AG04450 (cell line): ENCODE measurements at regions of chr15 and their contacts with region 1.

Region 1: DNA sequence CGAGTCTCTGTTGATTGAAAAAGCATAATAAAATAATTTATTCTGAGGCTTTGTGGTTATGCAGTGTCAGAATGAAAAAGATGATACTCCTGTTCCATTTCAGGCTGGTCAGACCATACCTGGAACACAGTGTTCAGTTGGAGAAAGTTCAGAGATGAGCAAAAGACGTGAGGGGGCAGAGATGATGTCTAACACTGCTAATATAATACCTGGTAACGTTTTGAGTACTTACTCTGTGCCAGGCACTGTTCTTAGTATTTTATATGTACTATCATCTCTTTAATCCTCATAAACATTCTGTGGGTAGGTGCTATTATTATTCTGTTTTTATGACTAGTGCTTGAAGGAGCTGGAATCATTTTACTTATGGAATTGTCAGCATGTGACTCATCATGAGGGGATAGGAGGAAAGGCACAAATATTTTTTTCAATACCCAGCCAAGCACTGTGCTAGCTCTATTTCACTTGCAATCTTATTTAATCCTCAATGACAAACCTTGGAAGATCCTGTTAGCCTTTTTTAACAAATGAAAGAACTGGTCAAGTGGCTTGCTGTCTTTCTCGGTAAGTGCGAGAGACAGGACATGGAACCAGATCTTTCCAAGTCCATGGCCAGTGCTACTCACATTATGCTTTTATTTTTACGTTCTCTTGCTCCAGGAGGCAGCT is 31.8 kb downstream of the IQGAP1 start:
- DNase-seq: peak; percentile 59
- H3K4me3 ChIP-seq: peak overlapping the region; percentile 38
- H3K27ac ChIP-seq: peak overlapping the region; percentile 80
- H3K27me3 ChIP-seq: no peaks in the 10 kb centered on the region
- CTCF ChIP-seq: no peak

Region 2: GRCh38 chr15:90387537-90388461 is 32.1 kb before region 1 on chr15 and contains the start of gene IQGAP1:
- CTCF ChIA-PET with region 1: no interaction called
- POLR2A ChIA-PET with region 1: interaction called, 10 read pairs
- DNase-seq: peak; percentile 90
- H3K4me3 ChIP-seq: peak within 1 kb of the TSS; percentile 96
- H3K27ac ChIP-seq: peak within 1 kb of the TSS; percentile 65
- H3K27me3 ChIP-seq: no peaks in the 10 kb centered on the region
- CTCF ChIP-seq: no peak
- polyA plus RNA-seq, gene IQGAP1: 141 and 170 TPM in 2 replicates